Naive thymus-derived CD4-positive, alpha-beta T cell (primary cell): ENCODE measurements at regions of chr10 and their contacts with region 1.

Region 1: DNA sequence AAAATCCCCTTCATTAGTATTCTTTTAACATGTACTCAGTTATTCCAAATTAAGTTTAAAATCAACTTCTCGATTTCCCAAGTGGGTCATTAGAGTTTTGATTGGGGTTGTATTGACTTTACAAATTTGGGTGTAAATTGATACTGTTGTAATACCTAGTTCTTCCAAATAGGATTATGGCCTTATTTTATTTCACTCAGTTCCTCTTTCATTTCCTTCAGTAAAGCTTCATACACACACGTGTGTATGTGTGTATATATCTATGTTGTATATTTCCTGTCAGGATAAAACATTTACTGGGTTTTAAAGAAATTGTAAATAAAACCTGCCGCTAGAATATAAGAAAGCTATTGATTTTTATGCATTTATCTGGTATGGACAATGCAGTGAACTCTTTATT is 15.9 kb downstream of the YME1L1 start:
- DNase-seq: no peak
- ATAC-seq: no peak
- H3K4me3 ChIP-seq: no peak overlapping the region
- H3K4me3 Mint-ChIP-seq: no peak overlapping the region
- H3K27ac ChIP-seq: no peak overlapping the region
- H3K27ac Mint-ChIP-seq: peak overlapping the region in 3 of 9 donors; percentile 14 to 16 (median 15)
- H3K4me1 ChIP-seq: no peaks in the 10 kb centered on the region
- H3K4me1 Mint-ChIP-seq: peaks cover 0 to 12% (median 4%) of the 10 kb centered on the region in 7 donors
- H3K27me3 ChIP-seq: no peaks in the 10 kb centered on the region
- H3K27me3 Mint-ChIP-seq: no peaks in the 10 kb centered on the region

Region 2: DNA sequence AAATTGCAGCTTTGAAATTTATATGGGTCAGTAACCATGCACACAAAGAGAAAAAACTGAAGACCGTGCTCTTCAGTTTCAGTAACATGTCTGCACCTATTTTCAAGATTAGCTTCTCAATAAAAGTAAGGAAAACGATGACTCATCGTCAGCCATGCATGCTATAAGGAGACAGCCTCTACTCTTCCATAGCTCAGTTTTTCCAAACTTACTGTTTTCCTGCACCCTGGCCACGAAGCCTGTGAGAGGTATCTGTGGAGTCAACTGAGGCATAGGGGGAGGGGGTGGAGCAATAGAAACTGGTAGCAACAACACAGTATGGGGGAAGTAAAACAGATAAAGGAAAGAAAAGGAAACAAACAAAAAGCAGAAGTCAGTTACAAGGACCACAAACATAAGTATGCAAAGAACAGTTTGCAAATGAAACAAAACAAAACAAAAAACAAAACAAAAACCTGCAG is 382.8 kb before region 1 on chr10:
- CTCF ChIA-PET with region 1: no interaction called
- POLR2A ChIA-PET with region 1: no interaction called
- intact Hi-C with region 1: loop called in 1 of 2 experiments (anchors 10 kb)
- DNase-seq: no peak
- ATAC-seq: no peak
- H3K4me3 ChIP-seq: no peak overlapping the region
- H3K4me3 Mint-ChIP-seq: peak overlapping the region in 1 of 10 donors; percentile 44
- H3K27ac ChIP-seq: no peak overlapping the region
- H3K27ac Mint-ChIP-seq: peak overlapping the region in 7 of 9 donors; percentile 32 to 78 (median 68)
- H3K4me1 ChIP-seq: no peaks in the 10 kb centered on the region
- H3K4me1 Mint-ChIP-seq: peaks cover 1 to 22% (median 4%) of the 10 kb centered on the region in 7 donors
- H3K27me3 ChIP-seq: no peaks in the 10 kb centered on the region
- H3K27me3 Mint-ChIP-seq: no peaks in the 10 kb centered on the region

Region 3: DNA sequence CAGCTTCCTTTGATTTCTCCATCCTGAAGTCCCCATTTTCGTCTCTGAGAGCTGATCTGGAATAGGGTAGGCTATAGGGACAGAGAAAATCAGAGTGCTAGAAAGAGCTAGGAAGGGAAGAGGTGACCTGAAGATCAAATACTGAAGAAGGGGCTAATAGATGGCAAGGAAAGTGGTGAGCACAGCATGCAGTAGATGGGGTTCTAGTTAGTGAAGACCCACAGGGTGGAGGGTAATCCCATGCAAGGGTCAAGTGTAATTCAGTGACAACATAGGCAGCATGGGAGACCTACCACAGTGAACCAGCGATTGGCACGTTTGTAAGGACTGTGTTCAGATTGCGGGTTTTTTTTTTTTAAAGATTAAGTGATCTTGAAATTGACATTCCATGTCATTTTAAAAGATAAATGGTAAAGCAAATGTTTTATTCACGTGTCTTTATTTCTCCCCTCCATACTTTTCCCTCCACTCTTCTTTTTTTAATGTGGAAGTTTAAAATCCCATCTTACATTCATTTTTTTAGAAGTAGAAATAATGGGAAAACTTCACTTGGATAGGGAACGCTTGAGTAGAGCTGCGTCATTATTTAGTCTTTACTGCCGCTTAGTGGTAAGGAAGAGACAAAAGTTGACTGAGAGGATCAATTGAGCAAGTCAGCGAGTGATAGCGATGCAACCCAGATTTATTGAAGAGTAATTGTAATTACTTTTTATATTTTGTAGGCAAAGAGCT is 256.5 kb before region 1 on chr10:
- CTCF ChIA-PET with region 1: no interaction called
- POLR2A ChIA-PET with region 1: no interaction called
- intact Hi-C with region 1: no loop called
- DNase-seq: peak in 6 of 9 donors; percentile 23 to 60 (median 37)
- ATAC-seq: peak; percentile 87
- H3K4me3 ChIP-seq: no peak overlapping the region
- H3K4me3 Mint-ChIP-seq: no peak overlapping the region
- H3K27ac ChIP-seq: no peak overlapping the region
- H3K27ac Mint-ChIP-seq: no peak overlapping the region
- H3K4me1 ChIP-seq: no peaks in the 10 kb centered on the region
- H3K4me1 Mint-ChIP-seq: peaks cover 0 to 8% (median 0%) of the 10 kb centered on the region in 7 donors
- H3K27me3 ChIP-seq: no peaks in the 10 kb centered on the region
- H3K27me3 Mint-ChIP-seq: peaks cover 4 to 37% (median 13%) of the 10 kb centered on the region in 5 donors

Region 4: DNA sequence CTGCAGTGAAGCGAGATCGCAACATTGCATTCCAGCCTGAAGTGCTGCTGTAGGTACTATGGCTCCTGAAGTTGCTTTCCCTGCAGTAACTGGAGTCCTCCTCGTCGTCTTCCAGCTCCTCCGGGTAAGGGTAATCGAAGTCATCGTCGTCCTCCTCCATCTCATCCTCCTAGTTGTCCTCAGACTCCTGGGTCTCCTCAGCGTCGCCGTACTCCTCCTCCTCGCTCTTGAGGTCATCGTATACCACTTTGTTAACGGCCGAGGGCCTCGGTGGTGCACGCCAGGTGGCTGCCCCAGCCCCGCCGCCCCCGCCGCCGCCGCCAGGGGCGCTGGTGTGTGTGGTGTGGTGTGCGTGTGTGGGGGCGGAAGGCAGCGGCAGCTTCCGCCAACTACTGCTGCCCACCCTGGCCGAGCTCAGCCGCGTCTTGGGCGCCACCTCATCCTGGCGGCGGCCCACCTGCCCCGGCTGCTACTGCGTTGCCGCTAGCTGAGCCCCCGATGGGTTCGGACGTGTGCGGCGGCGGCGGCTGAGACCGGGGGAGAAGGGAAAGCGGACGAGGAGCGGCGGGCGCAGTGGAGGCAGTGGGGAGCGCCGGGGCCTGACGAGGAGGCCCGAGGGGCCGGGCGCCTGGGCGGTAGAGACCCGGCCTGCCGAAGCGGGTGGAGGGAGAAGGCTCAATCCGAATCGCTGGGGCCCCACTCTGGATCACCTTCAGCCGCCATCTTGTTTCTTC is 114.2 kb after region 1 on chr10:
- CTCF ChIA-PET with region 1: no interaction called
- POLR2A ChIA-PET with region 1: no interaction called
- intact Hi-C with region 1: no loop called
- DNase-seq: peak; percentile 66 to 87 (median 80)
- ATAC-seq: peak; percentile 97
- H3K4me3 ChIP-seq: peak overlapping the region; percentile 51
- H3K4me3 Mint-ChIP-seq: peak overlapping the region; percentile 69 to 88 (median 80)
- H3K27ac ChIP-seq: peak overlapping the region; percentile 79
- H3K27ac Mint-ChIP-seq: peak overlapping the region; percentile 40 to 88 (median 81)
- H3K4me1 ChIP-seq: peaks cover 0 to under 1% of the 10 kb centered on the region in 2 donors
- H3K4me1 Mint-ChIP-seq: peaks cover 8 to 15% (median 13%) of the 10 kb centered on the region in 7 donors
- H3K27me3 ChIP-seq: no peaks in the 10 kb centered on the region
- H3K27me3 Mint-ChIP-seq: peaks cover 0 to 5% (median 5%) of the 10 kb centered on the region in 5 donors

Region 5: GRCh38 chr10:27558612-27559020 is 420.3 kb after region 1 on chr10:
- CTCF ChIA-PET with region 1: no interaction called
- POLR2A ChIA-PET with region 1: no interaction called
- intact Hi-C with region 1: no loop called
- DNase-seq: peak in 3 of 9 donors; percentile 10 to 25 (median 15)
- ATAC-seq: peak; percentile 63
- H3K4me3 ChIP-seq: no peak overlapping the region
- H3K4me3 Mint-ChIP-seq: no peak overlapping the region
- H3K27ac ChIP-seq: no peak overlapping the region
- H3K27ac Mint-ChIP-seq: peak overlapping the region in 1 of 9 donors; percentile 36
- H3K4me1 ChIP-seq: peaks cover 0 to under 1% of the 10 kb centered on the region in 2 donors
- H3K4me1 Mint-ChIP-seq: peaks cover 0 to 4% (median 0%) of the 10 kb centered on the region in 7 donors
- H3K27me3 ChIP-seq: no peaks in the 10 kb centered on the region
- H3K27me3 Mint-ChIP-seq: peaks cover 0 to 16% (median 0%) of the 10 kb centered on the region in 5 donors